Common myeloid progenitor, CD34-positive (primary cell): ENCODE measurements at regions of chr6 and their contacts with region 1.

Region 1: DNA sequence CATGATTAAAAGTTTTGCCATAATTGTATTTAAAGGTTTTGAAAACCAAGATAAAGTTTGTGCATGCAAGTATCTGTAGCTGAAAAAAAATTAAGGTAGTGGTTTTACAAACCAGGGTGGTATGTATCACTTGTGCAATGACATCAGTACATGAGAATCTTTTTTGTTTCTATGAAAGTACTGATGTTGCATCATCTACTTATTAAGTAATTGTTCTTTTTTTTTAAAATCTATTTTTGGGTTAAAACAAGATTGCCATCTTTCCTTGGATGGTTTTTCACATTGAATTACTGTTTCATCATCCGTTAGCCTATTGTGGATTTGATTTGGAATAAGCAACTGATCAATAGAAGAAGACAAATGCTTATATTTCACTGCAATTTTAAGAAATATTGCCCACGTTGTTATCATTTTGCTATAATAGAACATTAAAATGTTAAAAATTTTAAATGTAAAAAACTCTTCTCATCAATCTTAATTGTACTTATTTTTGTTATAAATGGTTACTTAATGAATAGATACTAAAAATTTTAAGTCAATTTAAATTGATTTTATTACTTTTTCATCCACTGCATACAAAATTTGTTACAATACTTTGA is 39.8 kb upstream of the TAGAP start:
- DNase-seq: peak in 2 of 3 donors; percentile 50 to 55
- H3K4me3 ChIP-seq: no peak overlapping the region
- H3K27ac ChIP-seq: no peak overlapping the region
- H3K4me1 ChIP-seq: peaks cover 15 to 26% (median 22%) of the 10 kb centered on the region in 4 experiments
- H3K27me3 ChIP-seq: no peaks in the 10 kb centered on the region

Region 2: DNA sequence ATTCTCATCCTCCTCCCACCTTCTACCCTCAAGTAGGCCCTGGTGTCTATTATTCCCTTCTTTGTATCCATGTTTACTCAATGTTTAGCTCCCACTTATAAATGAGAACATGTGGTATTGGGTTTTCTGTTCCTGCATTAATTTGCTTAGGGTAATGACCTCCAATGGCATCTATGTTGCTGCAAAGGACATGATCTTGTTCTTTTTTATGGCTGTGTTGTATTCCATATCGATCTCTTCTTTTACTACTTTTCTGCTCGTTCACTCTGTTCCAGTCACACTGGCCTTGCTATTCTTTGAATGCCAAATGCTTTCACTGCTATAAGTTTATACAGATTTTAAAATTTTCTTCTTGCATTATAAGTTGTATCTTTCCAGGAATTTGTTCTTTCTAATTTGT is 142.2 kb before region 1 on chr6:
- CTCF ChIA-PET with region 1: no interaction called
- POLR2A ChIA-PET with region 1: no interaction called
- DNase-seq: no peak
- H3K4me3 ChIP-seq: no peak overlapping the region
- H3K27ac ChIP-seq: no peak overlapping the region
- H3K4me1 ChIP-seq: peaks cover 0 to 13% (median 8%) of the 10 kb centered on the region in 4 experiments
- H3K27me3 ChIP-seq: peaks cover 0 to 14% (median 3%) of the 10 kb centered on the region in 5 experiments

Region 3: DNA sequence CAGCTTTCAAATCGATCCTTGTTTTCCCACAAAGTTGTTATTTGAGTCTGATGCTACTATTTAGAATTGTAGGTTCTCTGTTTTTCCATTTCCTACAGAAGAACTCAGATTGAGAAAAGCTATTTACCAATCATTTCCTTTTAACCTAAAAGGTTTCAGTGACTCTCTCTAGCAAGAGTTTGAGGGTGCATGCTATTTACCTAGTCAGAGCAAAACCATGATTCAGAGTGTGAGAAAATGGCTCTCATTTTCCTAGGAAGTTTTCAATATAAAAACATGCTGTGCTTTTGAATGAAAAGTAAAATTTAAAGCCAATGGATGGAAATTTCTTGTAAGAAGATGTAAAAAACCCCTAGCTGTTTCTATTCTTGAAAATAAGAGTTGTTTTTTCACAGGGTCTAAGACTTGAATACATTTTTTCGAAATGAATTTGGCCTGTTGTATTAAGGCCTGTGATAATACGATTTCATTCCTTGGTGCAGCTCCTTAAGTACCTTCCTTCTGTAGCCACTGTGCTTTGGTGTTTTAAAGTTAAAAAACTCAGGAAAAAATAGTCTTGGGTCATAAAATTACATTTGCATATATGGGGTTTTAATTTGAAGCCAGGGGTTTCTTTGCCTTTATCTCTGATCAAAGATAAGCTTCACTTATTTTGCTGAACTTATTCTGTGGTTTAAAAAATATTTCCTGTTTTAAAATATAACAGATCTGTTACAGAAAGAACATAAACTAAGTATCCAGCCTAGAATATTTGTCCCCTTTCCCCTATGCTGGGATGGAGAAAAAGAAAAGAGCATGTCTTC is 66.6 kb before region 1 on chr6:
- CTCF ChIA-PET with region 1: no interaction called
- POLR2A ChIA-PET with region 1: no interaction called
- DNase-seq: peak in 1 of 3 donors; percentile 17
- H3K4me3 ChIP-seq: peak overlapping the region in 2 of 7 experiments; percentile 10 to 15
- H3K27ac ChIP-seq: peak overlapping the region; percentile 15 to 35
- H3K4me1 ChIP-seq: peaks cover 14 to 27% (median 20%) of the 10 kb centered on the region in 4 experiments
- H3K27me3 ChIP-seq: no peaks in the 10 kb centered on the region

Region 4: GRCh38 chr6:159062564-159062945 is 22.0 kb before region 1 on chr6:
- CTCF ChIA-PET with region 1: interaction called, 10 read pairs
- POLR2A ChIA-PET with region 1: no interaction called
- DNase-seq: peak in 2 of 3 donors; percentile 79 to 83
- H3K4me3 ChIP-seq: peak overlapping the region in 1 of 7 experiments; percentile 26
- H3K27ac ChIP-seq: peak overlapping the region in 1 of 2 experiments; percentile 50
- H3K4me1 ChIP-seq: peaks cover 17 to 47% (median 22%) of the 10 kb centered on the region in 4 experiments
- H3K27me3 ChIP-seq: no peaks in the 10 kb centered on the region

Region 5: GRCh38 chr6:159161839-159162238 is 77.2 kb after region 1 on chr6:
- CTCF ChIA-PET with region 1: no interaction called
- POLR2A ChIA-PET with region 1: no interaction called
- DNase-seq: no peak
- H3K4me3 ChIP-seq: no peak overlapping the region
- H3K27ac ChIP-seq: no peak overlapping the region
- H3K4me1 ChIP-seq: no peaks in the 10 kb centered on the region
- H3K27me3 ChIP-seq: peaks cover 0 to 19% (median 8%) of the 10 kb centered on the region in 5 experiments